Astrocyte of the cerebellum (primary cell): ENCODE measurements at regions of chr2 and their contacts with region 1.

Region 1: DNA sequence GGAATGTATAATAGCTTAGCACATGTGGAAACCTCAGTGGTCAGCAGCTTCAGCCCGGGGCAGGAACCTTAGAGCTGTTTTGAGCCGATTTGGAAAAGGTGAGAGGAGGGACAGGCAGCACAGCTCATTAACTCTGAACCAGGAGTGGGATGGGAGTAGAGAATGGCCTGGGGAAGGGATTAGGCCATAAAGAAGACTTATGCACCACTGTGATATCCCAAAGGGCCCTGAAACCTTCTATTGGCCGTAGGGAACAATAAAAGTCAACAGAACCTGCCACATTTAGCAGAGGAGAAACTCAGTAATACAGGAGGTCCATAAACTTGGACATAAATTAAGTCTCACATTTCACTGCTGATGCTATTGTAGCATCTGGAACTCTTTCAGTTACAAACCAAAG is 124.2 kb upstream of the REV1 start:
- DNase-seq: no peak
- H3K4me3 ChIP-seq: no peak overlapping the region
- CTCF ChIP-seq: no peak

Region 2: GRCh38 chr2:99662761-99663341 is 48.9 kb after region 1 on chr2:
- in situ Hi-C with region 1: loop called (anchors 5 kb)
- DNase-seq: peak; percentile 99
- H3K4me3 ChIP-seq: no peak overlapping the region
- CTCF ChIP-seq: no peak